ENCODE measurements at regions of chr3 and their contacts with region 1.

Region 1: DNA sequence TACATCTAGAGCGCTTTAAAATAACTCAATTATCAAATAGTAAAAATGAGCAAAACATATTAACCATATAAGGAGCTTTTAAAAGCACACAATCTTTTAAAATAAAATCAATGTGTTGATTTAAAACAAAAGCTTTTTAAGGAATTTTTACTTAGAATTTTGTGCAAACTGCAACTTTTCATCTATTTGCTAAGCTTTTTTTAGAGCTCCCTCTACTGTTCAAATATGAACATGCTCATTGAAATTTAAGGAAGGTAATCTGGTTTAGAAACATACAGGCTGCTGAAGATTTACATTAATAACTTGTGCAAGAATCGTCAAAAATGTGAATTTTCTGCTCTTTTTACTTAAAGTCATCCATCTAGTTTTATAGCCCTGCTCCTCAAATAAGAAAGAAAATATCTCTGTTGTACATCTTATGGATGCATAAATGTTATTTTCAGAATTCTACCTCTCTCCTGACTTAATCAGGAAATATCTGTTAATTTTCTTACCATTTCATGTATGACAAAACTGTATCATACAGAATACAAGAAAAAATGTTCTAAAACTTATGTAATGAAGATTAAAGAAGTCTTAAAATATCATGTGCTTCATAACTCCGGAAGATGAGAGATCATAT is 469.4 kb upstream of the ROBO2 start:
- DNase-seq: no peak
- ATAC-seq: no peak

Region 2: DNA sequence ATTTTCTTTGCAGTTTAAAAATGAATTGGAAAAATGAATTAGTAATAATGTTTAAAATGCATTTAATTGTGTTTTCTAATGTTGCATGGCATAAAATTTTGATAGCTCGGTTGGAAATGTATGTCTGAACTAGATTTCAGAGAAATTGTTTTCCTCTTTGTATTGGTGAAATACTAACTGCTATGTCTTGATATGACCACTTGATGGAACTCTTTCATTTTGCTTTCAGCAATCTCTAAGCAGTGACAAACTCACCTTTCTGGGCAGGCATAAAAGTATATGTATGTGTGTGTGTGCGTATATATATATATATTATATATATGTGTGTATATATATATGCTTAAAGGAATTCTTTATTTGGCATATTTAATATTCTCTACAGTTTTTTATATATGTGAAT is 545.9 kb before region 1 on chr3:
- intact Hi-C with region 1: loop called in 1 of 2 experiments (anchors 5 kb)
- DNase-seq: no peak
- ATAC-seq: no peak

Region 3: GRCh38 chr3:76362643-76363042 is 207.9 kb before region 1 on chr3:
- intact Hi-C with region 1: loop called in 1 of 2 experiments (anchors 5 kb)
- DNase-seq: no peak
- ATAC-seq: no peak

Region 4: GRCh38 chr3:76908156-76908555 is 337.6 kb after region 1 on chr3:
- intact Hi-C with region 1: no loop called
- DNase-seq: no peak
- ATAC-seq: no peak

Measured in left cardiac atrium (tissue), 4 donors.